ENCODE measurements at regions of chr3 and their contacts with region 1.

Region 1: DNA sequence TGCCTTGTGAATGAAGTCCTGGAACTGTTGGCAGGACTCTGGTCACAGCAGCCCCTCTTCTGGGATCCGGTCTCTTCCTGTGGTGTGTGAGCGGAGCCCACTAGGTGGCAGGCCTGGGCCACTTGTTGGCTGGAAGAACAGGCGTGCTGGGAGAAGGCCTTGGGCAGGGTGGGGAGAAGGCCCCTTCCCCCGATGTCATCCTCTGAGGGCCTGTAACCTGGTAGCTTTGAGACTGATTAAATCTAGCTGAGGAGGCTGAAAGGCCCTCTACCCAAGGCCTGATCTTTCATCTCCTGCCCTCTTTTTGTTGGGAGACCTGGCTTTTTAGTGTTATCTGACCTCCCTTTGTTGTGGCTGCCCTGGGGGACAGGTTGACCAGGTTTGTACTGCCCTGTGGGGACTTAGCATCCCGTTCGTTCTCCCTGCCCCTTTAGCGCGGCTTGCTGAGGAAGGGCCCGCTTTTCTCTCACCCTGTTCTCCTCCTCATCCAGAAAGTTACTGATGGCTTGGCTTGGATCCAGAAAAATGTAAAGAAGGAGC is 48.3 kb downstream of the CHCHD6 start:
- DNase-seq: peak; percentile 88
- ATAC-seq: peak; percentile 96

Region 2: DNA sequence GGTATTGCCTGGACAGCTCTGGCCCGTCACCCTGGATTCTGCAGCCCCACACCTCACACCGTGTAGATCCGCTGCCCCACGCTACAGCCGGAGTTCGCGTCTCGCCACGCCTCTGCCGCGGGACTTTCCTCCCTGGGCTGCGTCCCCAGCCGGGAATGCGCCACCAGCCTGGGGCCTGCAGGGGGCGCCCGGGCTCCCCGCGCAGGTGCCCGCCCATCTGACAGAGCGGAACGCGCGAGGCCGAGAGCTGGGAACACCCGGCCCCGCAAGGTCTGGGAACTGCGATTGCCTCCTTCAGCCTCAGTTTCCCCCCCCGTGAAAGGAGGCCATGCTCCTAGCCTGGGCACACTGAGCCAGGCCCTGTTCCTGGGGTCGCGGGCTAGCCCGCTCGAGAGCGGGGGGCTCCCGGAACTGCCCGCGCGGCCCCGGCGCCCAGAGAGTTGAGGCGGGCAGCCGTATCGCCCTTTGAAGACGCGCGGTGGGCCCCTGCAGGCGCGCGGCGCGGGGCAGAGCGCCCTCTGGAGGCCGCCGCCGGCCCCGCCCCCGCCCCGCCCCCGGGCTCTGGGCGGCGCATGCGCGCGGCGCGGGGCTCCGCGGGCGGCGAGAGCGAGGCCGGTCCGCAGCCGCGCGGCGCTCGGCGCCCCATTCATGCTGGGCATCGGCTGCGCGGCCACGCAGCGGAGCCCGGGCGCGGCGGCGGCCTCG is 230.2 kb after region 1 on chr3 and contains the start of gene PLXNA1:
- intact Hi-C with region 1: loop called (anchors 2 kb)
- DNase-seq: peak; percentile 89
- ATAC-seq: peak; percentile 88
- total RNA-seq, gene PLXNA1: 23.2 TPM